ENCODE measurements at regions of chr6 and their contacts with region 1.

Region 1: DNA sequence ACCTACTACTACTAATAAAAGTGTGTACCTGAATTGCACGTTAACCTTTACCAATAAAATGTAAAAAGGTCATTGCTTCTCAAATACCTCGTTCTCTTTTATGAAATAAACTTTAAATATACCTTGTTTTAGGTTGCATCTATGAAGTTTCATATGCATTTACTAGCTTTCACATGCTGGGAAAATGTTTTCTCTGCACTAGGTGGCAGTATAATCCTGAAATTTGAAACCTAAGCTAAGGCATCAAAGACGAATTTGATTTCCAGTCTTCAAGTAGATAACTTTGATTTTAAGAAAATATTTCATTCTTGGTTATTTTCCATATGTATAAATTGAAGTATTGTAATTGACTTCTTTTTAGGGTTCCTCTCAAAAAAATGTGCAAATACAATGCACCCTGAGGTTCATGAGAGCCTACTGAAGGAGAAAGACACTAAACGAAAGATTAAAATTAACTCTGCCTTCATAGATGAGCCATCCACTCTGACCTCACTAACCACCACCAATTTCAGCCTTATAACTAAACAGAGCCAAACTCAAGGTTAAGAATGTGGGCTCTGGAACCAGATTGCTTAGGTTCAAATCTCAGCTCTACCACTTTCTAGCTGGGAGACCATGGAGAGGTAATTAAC is 7.3 kb upstream of the COL9A1 start:
- DNase-seq: no peak
- H3K4me3 Mint-ChIP-seq: no peak overlapping the region
- H3K27ac Mint-ChIP-seq: no peak overlapping the region
- H3K4me1 Mint-ChIP-seq: peaks cover 4% of the 10 kb centered on the region
- H3K27me3 Mint-ChIP-seq: peaks cover 19% of the 10 kb centered on the region

Region 2: DNA sequence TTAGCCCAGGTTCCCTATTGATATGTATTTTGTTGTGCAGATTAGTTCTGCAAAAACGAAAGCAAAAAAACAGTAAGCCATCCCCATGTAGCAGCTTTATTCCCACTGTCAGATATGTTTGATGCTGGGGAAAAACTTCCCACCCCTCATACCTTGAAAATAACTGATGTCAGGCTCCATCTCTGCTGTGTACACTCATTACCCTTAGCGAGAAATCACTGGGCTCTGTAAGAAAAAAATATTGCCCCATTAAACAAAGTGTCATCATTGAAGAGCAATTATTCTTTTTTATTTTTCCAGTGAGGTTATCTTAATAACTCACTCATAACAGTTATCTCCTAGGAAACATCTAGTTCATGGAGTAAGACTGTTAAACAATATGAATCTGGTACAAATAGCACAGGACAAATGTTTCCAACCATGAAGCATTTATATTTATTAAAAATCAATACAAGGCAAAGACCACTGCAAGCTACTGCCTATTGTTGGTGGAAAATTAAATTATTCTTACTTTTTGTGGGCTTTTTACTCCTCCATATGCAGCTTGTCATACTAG is 782.2 kb before region 1 on chr6:
- CTCF ChIA-PET with region 1: no interaction called
- intact Hi-C with region 1: no loop called
- DNase-seq: no peak
- H3K4me3 Mint-ChIP-seq: no peak overlapping the region
- H3K27ac Mint-ChIP-seq: no peak overlapping the region
- H3K4me1 Mint-ChIP-seq: no peaks in the 10 kb centered on the region
- H3K27me3 Mint-ChIP-seq: no peaks in the 10 kb centered on the region

Region 3: GRCh38 chr6:70221025-70221714 is 89.0 kb before region 1 on chr6:
- CTCF ChIA-PET with region 1: interaction called, 17 read pairs
- intact Hi-C with region 1: loop called (anchors 2 kb)
- DNase-seq: no peak
- H3K4me3 Mint-ChIP-seq: no peak overlapping the region
- H3K27ac Mint-ChIP-seq: no peak overlapping the region
- H3K4me1 Mint-ChIP-seq: no peaks in the 10 kb centered on the region
- H3K27me3 Mint-ChIP-seq: peaks cover 13% of the 10 kb centered on the region

Region 4: GRCh38 chr6:70264306-70264705 is 45.9 kb before region 1 on chr6:
- CTCF ChIA-PET with region 1: no interaction called
- intact Hi-C with region 1: no loop called
- DNase-seq: no peak
- H3K4me3 Mint-ChIP-seq: no peak overlapping the region
- H3K27ac Mint-ChIP-seq: no peak overlapping the region
- H3K4me1 Mint-ChIP-seq: no peaks in the 10 kb centered on the region
- H3K27me3 Mint-ChIP-seq: peaks cover 2% of the 10 kb centered on the region

Region 5: GRCh38 chr6:70327036-70327435 is 16.9 kb after region 1 on chr6:
- CTCF ChIA-PET with region 1: interaction called, 15 read pairs
- intact Hi-C with region 1: no loop called
- DNase-seq: no peak
- H3K4me3 Mint-ChIP-seq: no peak overlapping the region
- H3K27ac Mint-ChIP-seq: no peak overlapping the region
- H3K4me1 Mint-ChIP-seq: no peaks in the 10 kb centered on the region
- H3K27me3 Mint-ChIP-seq: peaks cover 4% of the 10 kb centered on the region

Region 6: GRCh38 chr6:70369332-70369950 is 59.3 kb after region 1 on chr6:
- CTCF ChIA-PET with region 1: interaction called, 100 read pairs
- intact Hi-C with region 1: loop called (anchors 1 kb)
- DNase-seq: peak; percentile 76
- H3K4me3 Mint-ChIP-seq: no peak overlapping the region
- H3K27ac Mint-ChIP-seq: no peak overlapping the region
- H3K4me1 Mint-ChIP-seq: no peaks in the 10 kb centered on the region
- H3K27me3 Mint-ChIP-seq: peaks cover 9% of the 10 kb centered on the region

Region 7: DNA sequence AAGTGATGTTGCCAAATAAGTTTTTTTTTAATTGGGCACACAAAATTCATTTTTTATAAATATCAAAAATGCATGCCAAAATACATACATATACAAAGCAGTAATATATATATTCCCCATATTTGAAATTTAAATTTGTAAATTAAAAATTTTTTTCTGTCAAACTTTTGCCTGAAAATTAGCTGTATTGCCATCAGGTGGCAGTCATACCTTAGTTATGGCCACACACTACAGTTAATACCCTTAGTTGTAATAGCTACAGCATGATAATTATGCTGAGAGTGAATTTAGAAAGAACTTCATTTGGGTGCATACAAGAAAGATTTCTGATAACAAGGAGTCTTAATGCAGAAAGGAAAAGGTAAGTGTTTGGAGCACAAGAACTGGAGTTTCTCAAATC is 210.4 kb after region 1 on chr6:
- CTCF ChIA-PET with region 1: interaction called, 3 read pairs
- intact Hi-C with region 1: loop called (anchors 10 kb)
- DNase-seq: peak; percentile 24
- H3K4me3 Mint-ChIP-seq: no peak overlapping the region
- H3K27ac Mint-ChIP-seq: no peak overlapping the region
- H3K4me1 Mint-ChIP-seq: peaks cover 7% of the 10 kb centered on the region
- H3K27me3 Mint-ChIP-seq: no peaks in the 10 kb centered on the region

Region 8: DNA sequence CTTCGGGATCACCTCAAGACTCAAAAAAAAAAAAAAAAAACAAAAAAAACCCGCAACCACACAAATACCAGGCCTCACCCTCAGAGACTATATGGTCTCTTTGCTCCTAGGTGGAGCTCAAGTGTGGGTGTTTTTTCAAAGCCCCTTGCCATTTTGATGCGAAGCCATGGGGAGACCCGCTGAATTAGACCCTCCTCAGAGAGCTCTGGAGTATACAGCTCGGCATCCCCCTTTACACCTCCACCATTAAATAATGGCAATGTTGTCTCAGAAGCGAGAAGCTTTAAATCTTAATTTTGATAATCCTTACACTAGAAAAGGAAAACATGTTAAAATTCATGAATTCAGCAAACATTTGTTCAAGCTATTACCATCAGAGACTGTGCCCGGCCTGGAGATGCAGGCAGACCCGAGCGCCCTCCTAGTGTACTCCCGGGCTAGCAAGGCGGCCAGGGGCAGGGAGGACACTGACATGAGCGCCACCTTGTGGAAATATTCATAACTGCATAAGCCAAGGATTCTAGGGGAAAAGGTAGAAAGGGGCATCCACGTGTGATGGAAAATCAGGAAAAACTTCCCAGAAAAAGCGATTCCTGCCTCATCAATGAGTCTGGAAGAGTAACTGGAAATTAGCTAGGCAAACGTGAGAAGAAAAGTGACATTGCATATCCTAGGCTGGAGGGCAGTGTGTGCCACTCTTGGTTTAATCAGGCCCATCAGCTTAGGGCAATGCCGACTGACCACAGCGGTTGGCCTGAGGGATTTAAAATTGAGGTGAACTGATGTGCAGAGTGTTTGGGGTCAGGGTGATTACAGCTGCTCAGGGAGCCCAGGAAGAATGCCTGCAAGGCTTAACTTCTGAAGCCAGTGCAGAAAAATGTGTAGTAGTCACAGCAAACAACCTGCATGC is 574.1 kb after region 1 on chr6:
- CTCF ChIA-PET with region 1: interaction called, 4 read pairs
- intact Hi-C with region 1: loop called (anchors 1 kb)
- DNase-seq: peak; percentile 70
- H3K4me3 Mint-ChIP-seq: no peak overlapping the region
- H3K27ac Mint-ChIP-seq: no peak overlapping the region
- H3K4me1 Mint-ChIP-seq: no peaks in the 10 kb centered on the region
- H3K27me3 Mint-ChIP-seq: peaks cover 4% of the 10 kb centered on the region

Region 9: GRCh38 chr6:71012866-71013469 is 702.8 kb after region 1 on chr6:
- CTCF ChIA-PET with region 1: interaction called, 4 read pairs
- intact Hi-C with region 1: loop called (anchors 2 kb)
- DNase-seq: peak; percentile 17
- H3K4me3 Mint-ChIP-seq: no peak overlapping the region
- H3K27ac Mint-ChIP-seq: no peak overlapping the region
- H3K4me1 Mint-ChIP-seq: no peaks in the 10 kb centered on the region
- H3K27me3 Mint-ChIP-seq: peaks cover 11% of the 10 kb centered on the region

Measured in activated naive CD4-positive, alpha-beta T cell treated with anti-CD3 and anti-CD28 coated beads for 36 hours (primary cell).